ENCODE measurements at regions of chr3 and their contacts with region 1.

Region 1: DNA sequence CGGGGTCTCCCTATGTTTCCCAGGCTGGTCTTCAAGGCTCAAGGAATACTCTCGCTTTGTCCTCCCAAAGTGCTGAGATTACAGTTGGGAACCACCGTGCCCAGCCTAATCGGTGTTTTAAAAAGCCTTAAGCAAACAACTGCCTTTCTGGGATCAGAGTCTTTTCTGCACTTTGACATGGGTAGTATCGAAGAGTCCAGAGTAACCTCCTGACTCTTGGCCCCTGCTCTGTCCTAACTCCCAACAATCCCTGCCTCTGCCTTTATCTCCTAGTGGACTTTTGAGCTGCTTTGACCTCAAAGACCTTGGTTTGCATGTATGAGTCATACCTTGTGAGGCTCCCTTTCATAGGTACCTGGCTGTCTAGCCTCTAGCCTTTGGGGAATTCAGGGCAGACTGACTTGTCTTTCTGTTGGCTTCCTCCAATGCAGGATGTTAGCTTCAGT is 21.0 kb upstream of the HACD2 start:
- DNase-seq: peak; percentile 73
- ATAC-seq: peak; percentile 25; the same call in 1 of the 2 replicates
- H3K4me3 ChIP-seq: no peak overlapping the region
- H3K27ac ChIP-seq: peak overlapping the region; percentile 63
- H3K4me1 ChIP-seq: peaks cover 58% of the 10 kb centered on the region
- H3K27me3 ChIP-seq: no peaks in the 10 kb centered on the region
- CTCF ChIP-seq: no peak

Region 2: GRCh38 chr3:123623346-123623880 is 17.6 kb after region 1 on chr3:
- CTCF ChIA-PET with region 1: no interaction called
- POLR2A ChIA-PET with region 1: no interaction called
- intact Hi-C with region 1: loop called (anchors 1 kb)
- DNase-seq: peak; percentile 87
- ATAC-seq: peak; percentile 74
- H3K4me3 ChIP-seq: no peak overlapping the region
- H3K27ac ChIP-seq: peak overlapping the region; percentile 68
- H3K4me1 ChIP-seq: peaks cover 39% of the 10 kb centered on the region
- H3K27me3 ChIP-seq: no peaks in the 10 kb centered on the region
- CTCF ChIP-seq: no peak

Region 3: GRCh38 chr3:123741041-123741511 is 135.3 kb after region 1 on chr3:
- CTCF ChIA-PET with region 1: no interaction called
- POLR2A ChIA-PET with region 1: interaction called, 13 read pairs
- intact Hi-C with region 1: no loop called
- DNase-seq: no peak
- ATAC-seq: no peak; the same call in 1 of the 2 replicates
- H3K4me3 ChIP-seq: no peak overlapping the region
- H3K27ac ChIP-seq: no peak overlapping the region
- H3K4me1 ChIP-seq: peaks cover 25% of the 10 kb centered on the region
- H3K27me3 ChIP-seq: no peaks in the 10 kb centered on the region
- CTCF ChIP-seq: no peak